ENCODE measurements at regions of chr15 and their contacts with region 1.

Region 1: GRCh38 chr15:28921919-28922706 is 36.3 kb downstream of the APBA2 start:
- DNase-seq: peak; percentile 55

Region 2: GRCh38 chr15:28861031-28861534 is 61.0 kb before region 1 on chr15:
- intact Hi-C with region 1: loop called in 1 of 2 experiments (anchors 2 kb)
- DNase-seq: no peak

Region 3: GRCh38 chr15:29566914-29567313 is 644.8 kb after region 1 on chr15:
- intact Hi-C with region 1: no loop called
- DNase-seq: no peak